Breast epithelium (tissue), 4 donors: ENCODE measurements at regions of chr10 and their contacts with region 1.

Region 1: DNA sequence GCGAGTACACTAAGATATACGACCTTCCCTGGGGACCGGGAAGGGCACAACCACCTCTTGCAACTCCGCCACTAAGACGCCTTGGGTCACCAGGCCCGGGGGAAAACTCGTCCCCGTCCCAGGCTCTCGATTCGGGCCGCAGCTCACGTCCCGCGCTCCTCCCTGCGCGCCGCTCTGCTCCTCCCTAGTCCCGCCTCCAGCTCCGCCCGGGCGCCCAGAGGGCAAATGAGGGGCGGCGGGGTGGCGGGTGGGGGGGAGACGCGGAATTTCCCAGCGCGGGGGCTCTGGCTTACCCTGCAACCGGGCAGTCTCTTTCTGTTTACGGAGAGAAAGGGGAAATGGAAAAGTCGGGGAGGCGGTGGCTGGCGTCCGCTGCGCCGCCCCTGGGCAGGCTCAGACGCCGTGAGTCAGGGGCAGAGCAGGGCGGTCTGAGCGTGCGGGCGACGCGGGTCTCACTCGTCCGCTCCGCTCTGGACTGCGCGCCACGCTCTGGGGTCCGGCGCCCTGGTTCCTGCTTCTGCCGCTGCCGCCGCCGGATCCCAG is at the start of gene MAP3K8:
- DNase-seq: peak; percentile 82 to 90
- H3K4me3 ChIP-seq: peak within 1 kb of the TSS; percentile 75 to 93 (median 90)
- H3K27ac ChIP-seq: peak within 1 kb of the TSS; percentile 98 to 100
- H3K4me1 ChIP-seq: peaks cover 0 to 10% of the 10 kb centered on the region in 2 donors
- H3K27me3 ChIP-seq: no peaks in the 10 kb centered on the region
- CTCF ChIP-seq: no peak
- POLR2A ChIP-seq: peak; percentile 62
- total RNA-seq, gene MAP3K8: 34.4 to 45.9 (median 40.2) TPM

Region 2: GRCh38 chr10:29892301-29892700 is 541.5 kb before region 1 on chr10:
- intact Hi-C with region 1: loop called (anchors 5 kb)
- DNase-seq: no peak
- H3K4me3 ChIP-seq: no peak overlapping the region
- H3K27ac ChIP-seq: no peak overlapping the region
- H3K4me1 ChIP-seq: peaks cover 0 to 4% of the 10 kb centered on the region in 2 donors
- H3K27me3 ChIP-seq: no peaks in the 10 kb centered on the region
- CTCF ChIP-seq: no peak
- POLR2A ChIP-seq: no peak

Region 3: DNA sequence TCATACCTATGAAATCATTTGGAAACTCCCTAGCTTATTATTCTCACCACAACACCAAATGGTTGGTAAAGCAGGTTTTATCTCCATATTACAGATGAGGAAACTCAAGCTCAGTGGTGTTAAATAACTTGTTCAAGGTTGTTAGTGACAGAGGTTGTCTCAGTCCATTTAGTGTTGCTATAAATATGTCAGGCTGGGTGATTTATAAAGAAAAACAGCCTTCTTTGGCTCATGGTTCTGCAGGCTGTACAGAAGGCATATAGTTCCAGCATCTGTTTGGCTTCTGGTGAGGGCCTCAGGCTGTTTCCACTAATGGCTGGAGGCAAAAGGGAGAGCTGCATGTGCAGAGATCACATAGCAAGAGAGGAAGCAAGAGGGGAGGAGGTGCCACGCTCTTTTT is 501.3 kb after region 1 on chr10:
- intact Hi-C with region 1: no loop called
- DNase-seq: no peak
- H3K4me3 ChIP-seq: no peak overlapping the region
- H3K27ac ChIP-seq: no peak overlapping the region
- H3K4me1 ChIP-seq: no peaks in the 10 kb centered on the region
- H3K27me3 ChIP-seq: no peaks in the 10 kb centered on the region
- CTCF ChIP-seq: no peak
- POLR2A ChIP-seq: no peak